Right cardiac atrium (tissue), 5 donors: ENCODE measurements at regions of chr12 and their contacts with region 1.

Region 1: DNA sequence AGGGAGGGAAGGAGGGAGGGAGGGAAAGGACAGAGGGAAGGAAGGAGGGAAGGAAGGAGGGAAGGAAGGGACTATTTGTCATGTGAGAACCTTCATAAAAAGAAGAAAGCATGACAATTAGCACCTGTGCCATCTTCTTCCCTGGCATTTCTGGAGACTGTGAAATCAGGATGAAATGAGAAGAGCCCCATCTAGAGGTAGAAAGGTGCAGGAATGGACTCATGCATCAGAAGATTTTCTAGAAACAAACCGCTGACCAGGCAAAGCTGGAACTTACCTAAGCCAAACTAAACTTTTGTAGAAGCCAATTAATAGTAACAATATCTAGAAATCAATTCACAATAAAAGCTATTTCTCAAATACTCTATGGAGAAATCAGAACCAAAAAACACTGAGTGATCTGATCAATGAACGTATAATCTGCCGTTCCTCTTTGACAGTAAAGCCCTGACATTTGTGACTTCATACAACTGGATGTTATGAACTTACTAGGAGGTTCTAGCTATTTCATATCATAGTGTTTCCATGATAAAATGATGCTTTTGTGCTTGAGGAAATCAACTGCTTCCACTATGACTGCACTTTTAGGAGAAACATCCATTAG is 24.4 kb upstream of the CRACR2A start:
- DNase-seq: no peak
- ATAC-seq: peak; percentile 63 to 76
- H3K4me3 ChIP-seq: no peak overlapping the region
- H3K27ac ChIP-seq: no peak overlapping the region
- H3K4me1 ChIP-seq: no peaks in the 10 kb centered on the region
- H3K27me3 ChIP-seq: no peaks in the 10 kb centered on the region

Region 2: GRCh38 chr12:3658327-3659163 is 118.8 kb before region 1 on chr12:
- intact Hi-C with region 1: loop called in 2 of 4 experiments (anchors 5 to 10 kb)
- DNase-seq: peak; percentile 51 to 71 (median 65)
- ATAC-seq: peak; percentile 67 to 92
- H3K4me3 ChIP-seq: no peak overlapping the region
- H3K27ac ChIP-seq: no peak overlapping the region
- H3K4me1 ChIP-seq: peaks cover 4% of the 10 kb centered on the region
- H3K27me3 ChIP-seq: no peaks in the 10 kb centered on the region